HepG2 (cell line): ENCODE measurements at regions of chr17 and their contacts with region 1.

Region 1: GRCh38 chr17:16285957-16286640 is 67.2 kb downstream of the CENPV start:
- DNase-seq: peak; percentile 99
- ATAC-seq: peak; percentile 95
- H3K4me3 ChIP-seq: peak overlapping the region in 2 of 3 experiments; percentile 34 to 45; a peak in 5 of 6 replicates
- H3K27ac ChIP-seq: peak overlapping the region; percentile 95
- H3K4me1 ChIP-seq: peaks cover 79% of the 10 kb centered on the region
- H3K27me3 ChIP-seq: no peaks in the 10 kb centered on the region; a peak in 1 of 5 replicates
- CTCF ChIP-seq: peak; percentile 99
- EP300 ChIP-seq: peak; percentile 55 to 76; a peak in 3 of 4 replicates
- POLR2A ChIP-seq: peak; percentile 81 to 88
- RAD21 ChIP-seq: peak; percentile 95

Region 2: GRCh38 chr17:16215273-16215964 is 70.7 kb before region 1 on chr17 and contains the start of gene NCOR1:
- CTCF ChIA-PET with region 1: no interaction called
- POLR2A ChIA-PET with region 1: interaction called, 77 read pairs
- in situ Hi-C with region 1: no loop called
- intact Hi-C with region 1: loop called (anchors 1 kb)
- DNase-seq: peak; percentile 85
- ATAC-seq: peak; percentile 90
- H3K4me3 ChIP-seq: peak within 1 kb of the TSS; percentile 84 to 91 (median 88)
- H3K27ac ChIP-seq: peak within 1 kb of the TSS; percentile 99
- H3K4me1 ChIP-seq: peaks cover 43% of the 10 kb centered on the region
- H3K27me3 ChIP-seq: no peaks in the 10 kb centered on the region; a peak in 1 of 5 replicates
- CTCF ChIP-seq: peak; percentile 63
- EP300 ChIP-seq: 0 out of 4 replicates have a peak, but pooled peaks of 1 of the 2 experiments have one; percentile 10
- POLR2A ChIP-seq: peak; percentile 91 to 93
- RAD21 ChIP-seq: peak; percentile 60; the same call in 1 of the 2 replicates
- total RNA-seq, gene NCOR1: 57.0 and 80.4 TPM in 2 replicates

Region 3: DNA sequence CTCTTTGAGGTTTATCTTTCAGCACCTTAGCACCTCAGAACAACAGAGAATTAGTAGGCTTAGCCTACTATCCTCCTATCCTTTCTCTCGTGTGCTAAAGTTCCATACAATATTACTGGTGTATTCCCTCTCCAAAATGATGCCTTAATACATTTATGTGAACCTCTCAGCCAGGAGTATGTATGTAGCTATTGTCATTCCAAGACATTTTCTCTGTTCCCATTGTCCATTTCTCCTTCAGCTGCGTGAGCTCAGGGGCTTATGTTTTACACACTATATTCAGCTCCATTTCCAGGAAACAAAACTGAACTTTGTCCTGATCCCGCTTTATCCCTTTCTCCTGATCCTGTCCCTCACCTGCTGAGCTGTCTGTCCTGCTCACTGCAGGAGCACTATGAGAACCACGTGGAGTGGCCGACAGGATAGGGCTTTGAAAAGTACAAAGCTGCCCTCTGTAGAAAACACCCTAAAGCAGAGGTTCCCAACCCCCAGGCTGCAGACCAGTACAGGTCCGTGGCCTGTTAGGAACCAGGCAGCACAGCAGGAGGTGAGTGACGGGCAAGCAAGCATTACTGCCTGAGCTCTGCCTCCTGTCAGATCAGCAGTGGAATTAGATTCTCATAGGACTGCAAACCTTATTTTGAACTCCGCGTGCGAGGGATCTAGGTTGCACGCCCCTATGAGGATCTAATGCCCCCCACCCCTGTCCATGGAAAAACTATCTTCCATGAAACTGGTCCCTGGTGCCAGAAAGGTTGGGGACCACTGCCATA is 11.5 kb after region 1 on chr17:
- CTCF ChIA-PET with region 1: no interaction called
- POLR2A ChIA-PET with region 1: interaction called, 258 read pairs
- in situ Hi-C with region 1: no loop called
- intact Hi-C with region 1: loop called (anchors 1 kb)
- DNase-seq: peak; percentile 86
- ATAC-seq: peak; percentile 77
- H3K4me3 ChIP-seq: peak overlapping the region in 2 of 3 experiments; percentile 17 to 42; a peak in 4 of 6 replicates
- H3K27ac ChIP-seq: peak overlapping the region; percentile 97
- H3K4me1 ChIP-seq: peaks cover 78% of the 10 kb centered on the region
- H3K27me3 ChIP-seq: no peaks in the 10 kb centered on the region
- CTCF ChIP-seq: peak; percentile 33; the same call in 1 of the 2 replicates
- EP300 ChIP-seq: peak in 1 of 2 experiments; percentile 38; a peak in 1 of 4 replicates
- POLR2A ChIP-seq: peak; percentile 24 to 75; a peak in 3 of 4 replicates
- RAD21 ChIP-seq: no peak

Region 4: GRCh38 chr17:16313139-16314090 is 27.3 kb after region 1 on chr17:
- CTCF ChIA-PET with region 1: no interaction called
- POLR2A ChIA-PET with region 1: interaction called, 111 read pairs
- in situ Hi-C with region 1: no loop called
- intact Hi-C with region 1: no loop called
- DNase-seq: peak; percentile 94
- ATAC-seq: peak; percentile 97
- H3K4me3 ChIP-seq: peak overlapping the region in 2 of 3 experiments; percentile 1 to 35; a peak in 2 of 6 replicates
- H3K27ac ChIP-seq: peak overlapping the region; percentile 97
- H3K4me1 ChIP-seq: peaks cover 55% of the 10 kb centered on the region
- H3K27me3 ChIP-seq: no peaks in the 10 kb centered on the region
- CTCF ChIP-seq: peak; percentile 11; the same call in 1 of the 2 replicates
- EP300 ChIP-seq: peak in 1 of 2 experiments; percentile 76; a peak in 3 of 4 replicates
- POLR2A ChIP-seq: peak; percentile 44 to 55; a peak in 2 of 4 replicates
- RAD21 ChIP-seq: 0 out of 2 replicates have a peak, but pooled peaks have one; percentile 41

Region 5: DNA sequence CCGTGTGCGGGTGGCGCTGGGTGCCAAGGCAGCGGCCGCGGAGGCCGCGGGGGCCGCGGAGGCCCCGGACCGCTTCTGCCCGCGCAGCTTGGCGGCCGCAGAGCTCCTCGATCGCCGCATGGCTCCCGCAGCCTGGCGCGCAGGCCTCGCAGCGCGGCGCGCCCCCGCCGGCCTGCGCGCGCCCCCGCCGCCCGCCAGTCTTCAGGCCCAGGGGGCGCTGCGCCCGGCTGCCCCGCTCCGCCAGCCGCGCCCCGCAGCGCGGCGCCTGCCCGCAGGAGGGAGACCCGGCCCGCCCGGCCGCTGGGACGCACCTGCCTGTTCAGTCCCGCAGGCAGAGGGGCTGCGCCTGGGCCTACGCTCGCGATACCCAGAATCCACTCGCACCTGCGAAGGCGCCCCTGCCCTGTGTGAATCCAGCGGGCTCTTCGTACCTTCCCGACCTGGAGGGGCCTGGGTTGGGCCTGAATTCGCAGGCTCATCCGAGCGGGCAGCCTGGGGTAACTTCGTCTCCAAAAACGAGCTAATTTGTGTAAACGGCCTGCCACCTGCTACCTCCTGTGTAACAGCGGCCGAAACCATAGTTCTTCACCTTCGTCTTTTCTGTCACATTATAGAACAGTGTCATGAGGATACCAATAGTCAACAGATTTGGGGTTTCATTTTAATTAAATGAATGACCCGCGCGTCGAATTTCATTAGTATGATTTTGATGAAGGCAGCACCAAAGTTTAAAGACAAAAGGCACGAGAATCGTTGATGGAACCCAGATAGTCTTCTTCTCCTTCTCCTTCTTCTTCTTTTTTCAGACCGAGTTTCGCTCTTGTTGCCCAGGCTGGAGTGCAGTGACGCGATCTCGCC is 67.4 kb after region 1 on chr17 and contains the start of gene CENPV:
- CTCF ChIA-PET with region 1: interaction called, 6 read pairs
- POLR2A ChIA-PET with region 1: interaction called, 68 read pairs
- in situ Hi-C with region 1: loop called (anchors 5 kb)
- intact Hi-C with region 1: loop called (anchors 1 kb)
- DNase-seq: peak; percentile 69
- ATAC-seq: peak; percentile 91
- H3K4me3 ChIP-seq: peak within 1 kb of the TSS; percentile 85 to 89 (median 87)
- H3K27ac ChIP-seq: peak within 1 kb of the TSS; percentile 94
- H3K4me1 ChIP-seq: peaks cover 35% of the 10 kb centered on the region
- H3K27me3 ChIP-seq: no peaks in the 10 kb centered on the region
- CTCF ChIP-seq: peak; percentile 49
- EP300 ChIP-seq: no peak
- POLR2A ChIP-seq: peak; percentile 53 to 76; a peak in 3 of 4 replicates
- RAD21 ChIP-seq: peak; percentile 72
- total RNA-seq, gene CENPV: 216 and 292 TPM in 2 replicates